Left lung (tissue), 14 donors: ENCODE measurements at regions of chr1 and their contacts with region 1.

Region 1: GRCh38 chr1:34852677-34853217 is 6.8 kb downstream of the SMIM12 start:
- DNase-seq: peak; percentile 46 to 87 (median 86)
- ATAC-seq: peak; percentile 100
- H3K4me3 ChIP-seq: no peak overlapping the region
- H3K27ac ChIP-seq: no peak overlapping the region
- H3K4me1 ChIP-seq: peaks cover 0 to 44% of the 10 kb centered on the region in 2 donors
- H3K27me3 ChIP-seq: no peaks in the 10 kb centered on the region
- CTCF ChIP-seq: peak; percentile 91 to 97

Region 2: DNA sequence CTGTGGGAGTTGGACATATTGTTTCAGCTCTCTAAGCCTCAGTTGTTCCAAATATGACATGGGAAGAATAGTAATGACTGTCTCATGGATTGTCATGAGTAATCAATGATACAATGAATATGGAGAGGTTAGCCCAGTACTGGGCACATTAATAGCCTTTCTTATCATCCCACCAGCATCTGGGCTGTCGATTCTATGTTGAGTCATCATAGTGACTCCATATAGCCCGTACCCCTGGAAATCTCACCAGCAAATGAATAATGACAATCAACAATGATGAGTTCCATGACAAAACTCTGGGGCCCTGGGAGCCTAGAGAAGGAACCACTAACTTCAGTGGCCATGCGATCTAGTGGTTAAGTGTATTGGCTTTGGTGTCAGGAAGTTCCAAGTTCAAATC is 137.6 kb before region 1 on chr1:
- intact Hi-C with region 1: no loop called
- DNase-seq: no peak
- ATAC-seq: no peak
- H3K4me3 ChIP-seq: no peak overlapping the region
- H3K27ac ChIP-seq: no peak overlapping the region
- H3K4me1 ChIP-seq: no peaks in the 10 kb centered on the region
- H3K27me3 ChIP-seq: peaks cover 0 to 7% of the 10 kb centered on the region in 2 donors
- CTCF ChIP-seq: no peak

Region 3: GRCh38 chr1:34786521-34787325 is 66.0 kb before region 1 on chr1:
- intact Hi-C with region 1: loop called (anchors 5 kb)
- DNase-seq: peak in 3 of 4 donors; percentile 19 to 66 (median 54)
- ATAC-seq: peak; percentile 89
- H3K4me3 ChIP-seq: no peak overlapping the region
- H3K27ac ChIP-seq: no peak overlapping the region
- H3K4me1 ChIP-seq: peaks cover 0 to 3% of the 10 kb centered on the region in 2 donors
- H3K27me3 ChIP-seq: peaks cover 4 to 34% of the 10 kb centered on the region in 2 donors
- CTCF ChIP-seq: peak; percentile 73 to 81

Region 4: GRCh38 chr1:34792868-34793727 is 59.6 kb before region 1 on chr1 and contains the start of gene GJA4:
- intact Hi-C with region 1: loop called (anchors 5 kb)
- DNase-seq: peak in 1 of 4 donors; percentile 62
- ATAC-seq: peak; percentile 23
- H3K4me3 ChIP-seq: peak within 1 kb of the TSS; percentile 19 to 42
- H3K27ac ChIP-seq: peak within 1 kb of the TSS; percentile 54 to 55
- H3K4me1 ChIP-seq: no peaks in the 10 kb centered on the region
- H3K27me3 ChIP-seq: peaks cover 4 to 38% of the 10 kb centered on the region in 2 donors
- CTCF ChIP-seq: no peak
- polyA plus RNA-seq, gene GJA4: 25.1 to 34.7 (median 32.7) TPM

Region 5: GRCh38 chr1:35047188-35047858 is 194.6 kb after region 1 on chr1:
- intact Hi-C with region 1: no loop called
- DNase-seq: no peak
- ATAC-seq: no peak
- H3K4me3 ChIP-seq: no peak overlapping the region
- H3K27ac ChIP-seq: no peak overlapping the region
- H3K4me1 ChIP-seq: no peaks in the 10 kb centered on the region
- H3K27me3 ChIP-seq: no peaks in the 10 kb centered on the region
- CTCF ChIP-seq: no peak